Adrenal gland (tissue), 19 donors: ENCODE measurements at regions of chr6 and their contacts with region 1.

Region 1: DNA sequence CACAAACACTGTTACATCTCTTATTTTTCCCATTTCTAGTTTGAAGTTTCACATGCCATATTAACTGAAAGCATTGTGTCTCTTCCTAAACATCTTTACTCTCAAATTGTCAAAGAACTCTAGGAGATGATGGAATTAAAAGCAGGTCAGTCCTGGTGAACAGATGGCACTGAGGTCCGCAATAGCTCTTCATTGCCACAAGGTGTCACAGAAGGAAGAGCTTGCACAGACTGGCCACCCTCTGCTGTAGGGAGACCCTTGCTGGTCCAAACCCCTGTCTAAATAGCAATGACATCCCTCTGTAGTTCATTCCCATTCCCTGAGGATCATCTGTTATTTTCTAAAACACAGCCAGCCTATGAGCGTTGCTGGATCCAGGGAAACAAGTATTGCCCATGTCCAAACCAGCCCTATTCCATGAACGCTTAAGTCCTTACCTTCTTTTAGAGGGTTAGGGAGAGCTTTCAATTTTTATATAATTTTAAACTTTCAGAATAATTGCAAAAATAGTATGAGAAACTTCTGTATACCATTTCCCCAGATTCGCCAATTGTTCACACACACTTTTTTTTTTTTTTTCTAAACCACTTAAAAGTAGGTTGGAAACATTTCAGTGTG is 10.1 kb upstream of the HDAC2 start:
- DNase-seq: peak in 1 of 7 donors; percentile 10
- H3K4me3 ChIP-seq: no peak overlapping the region
- H3K27ac ChIP-seq: no peak overlapping the region
- H3K4me1 ChIP-seq: no peaks in the 10 kb centered on the region
- H3K27me3 ChIP-seq: no peaks in the 10 kb centered on the region
- CTCF ChIP-seq: peak in 5 of 6 experiments; percentile 9 to 38 (median 25)
- POLR2A ChIP-seq: no peak

Region 2: GRCh38 chr6:113281014-113281413 is 700.0 kb before region 1 on chr6:
- intact Hi-C with region 1: no loop called
- DNase-seq: no peak
- H3K4me3 ChIP-seq: no peak overlapping the region
- H3K27ac ChIP-seq: no peak overlapping the region
- H3K4me1 ChIP-seq: no peaks in the 10 kb centered on the region
- H3K27me3 ChIP-seq: no peaks in the 10 kb centered on the region
- CTCF ChIP-seq: no peak
- POLR2A ChIP-seq: no peak

Region 3: GRCh38 chr6:113858480-113859348 is 122.3 kb before region 1 on chr6:
- intact Hi-C with region 1: no loop called
- DNase-seq: peak; percentile 62 to 88 (median 76)
- H3K4me3 ChIP-seq: peak overlapping the region in 3 of 4 donors; percentile 18 to 70 (median 39)
- H3K27ac ChIP-seq: peak overlapping the region in 4 of 5 donors; percentile 50 to 91 (median 86)
- H3K4me1 ChIP-seq: peaks cover 8 to 23% of the 10 kb centered on the region in 2 donors
- H3K27me3 ChIP-seq: peaks cover 6% of the 10 kb centered on the region
- CTCF ChIP-seq: peak; percentile 48 to 99 (median 84)
- POLR2A ChIP-seq: peak; percentile 39 to 47

Region 4: DNA sequence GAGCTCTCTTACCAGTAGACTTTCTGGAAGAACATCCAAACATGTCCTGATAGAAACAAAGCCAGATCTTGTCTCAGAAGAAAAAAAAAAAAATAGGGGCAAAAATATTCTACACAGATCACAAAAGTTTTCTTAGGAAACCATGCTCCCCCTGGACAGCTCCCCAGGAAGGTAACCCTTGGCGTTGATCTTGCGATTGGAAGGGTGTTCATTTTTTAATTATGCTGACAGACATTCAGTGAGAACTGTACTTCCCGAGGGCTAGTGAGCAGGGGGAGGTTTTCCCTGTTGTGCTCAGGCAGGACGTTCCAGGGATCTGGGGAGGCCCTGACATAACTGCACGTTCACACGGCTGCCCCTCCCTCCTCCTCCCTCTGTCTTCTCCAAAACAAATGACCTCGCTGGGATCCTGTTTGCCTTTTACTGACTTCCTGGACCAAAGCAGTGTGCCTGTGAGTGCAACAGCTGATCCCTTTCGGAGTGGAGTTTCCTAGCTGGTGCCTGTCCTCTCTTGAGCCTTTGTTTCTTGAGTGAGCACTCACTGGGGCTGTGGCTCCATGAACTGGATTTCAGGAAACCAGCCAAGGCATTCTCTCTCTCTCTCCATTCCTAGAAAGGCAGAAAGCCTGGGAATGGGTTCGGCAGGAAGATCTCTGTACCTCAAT is 77.2 kb before region 1 on chr6:
- intact Hi-C with region 1: no loop called
- DNase-seq: peak; percentile 16 to 72 (median 29)
- H3K4me3 ChIP-seq: no peak overlapping the region
- H3K27ac ChIP-seq: no peak overlapping the region
- H3K4me1 ChIP-seq: no peaks in the 10 kb centered on the region
- H3K27me3 ChIP-seq: no peaks in the 10 kb centered on the region
- CTCF ChIP-seq: no peak
- POLR2A ChIP-seq: no peak

Region 5: GRCh38 chr6:114119056-114119455 is 138.0 kb after region 1 on chr6:
- intact Hi-C with region 1: loop called in 1 of 2 experiments (anchors 10 kb)
- DNase-seq: no peak
- H3K4me3 ChIP-seq: no peak overlapping the region
- H3K27ac ChIP-seq: no peak overlapping the region
- H3K4me1 ChIP-seq: no peaks in the 10 kb centered on the region
- H3K27me3 ChIP-seq: no peaks in the 10 kb centered on the region
- CTCF ChIP-seq: no peak
- POLR2A ChIP-seq: no peak